Activated T-helper 1 cell treated with anti-CD3 and anti-CD28 coated beads, Interleukin-12 subunit alpha, Interleukin-12 subunit beta, Interleukin-2, Interleukin-4 antibody, amounts not matched to agents 30 ng/mL and 10 ng/mL and 1 ng/mL, durations not matched to agents 14 hours and 24 hours and 36 hours (primary cell): ENCODE measurements at regions of chr19 and their contacts with region 1.

Region 1: DNA sequence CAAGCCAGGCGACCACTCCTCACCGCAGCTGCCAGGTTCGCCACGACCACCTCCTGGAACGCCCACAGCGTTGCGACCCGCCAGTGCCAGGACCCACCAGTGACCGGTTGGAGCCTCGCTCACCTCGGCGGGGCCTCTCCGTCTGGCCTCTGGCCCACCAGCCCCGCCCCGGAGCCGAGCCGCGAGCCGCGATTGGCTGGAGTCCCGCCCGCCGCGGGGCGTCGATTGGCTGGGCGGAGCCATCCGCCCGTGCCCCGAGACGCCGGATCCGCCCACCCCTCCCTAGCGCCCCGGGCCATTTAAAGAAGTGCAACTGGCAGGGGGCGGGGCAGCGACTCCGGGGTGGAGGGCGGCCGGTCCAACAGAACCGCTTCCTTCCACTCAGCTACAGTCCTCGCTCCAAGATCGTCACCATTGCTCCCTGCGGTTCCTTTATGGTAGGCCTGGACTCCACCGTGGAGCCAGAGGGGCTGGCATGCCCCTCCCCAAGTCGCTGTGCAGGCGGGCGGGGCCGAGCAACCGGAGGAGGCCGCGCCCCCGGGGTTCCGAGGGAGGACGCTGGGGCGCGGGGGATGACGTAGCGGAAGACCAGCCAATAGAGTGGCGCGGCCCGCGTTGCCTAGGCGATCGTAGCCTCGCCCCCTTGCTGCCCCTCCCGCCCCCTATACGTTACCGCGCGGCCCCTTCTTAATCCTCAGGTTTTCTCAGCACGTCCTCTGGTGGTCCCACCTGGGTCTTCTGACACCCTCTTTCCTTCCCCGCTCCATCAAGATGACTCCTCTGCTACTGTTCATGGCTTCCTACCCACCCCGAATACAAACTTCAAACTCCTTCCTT is at the start of gene SERTAD3:
- DNase-seq: peak; percentile 97
- H3K4me3 Mint-ChIP-seq: peak within 1 kb of the TSS; percentile 97
- H3K27ac Mint-ChIP-seq: peak within 1 kb of the TSS; percentile 97
- H3K4me1 Mint-ChIP-seq: peaks cover 26% of the 10 kb centered on the region
- H3K27me3 Mint-ChIP-seq: no peaks in the 10 kb centered on the region
- total RNA-seq, gene SERTAD3: 6.4 and 10.0 TPM in 2 replicates

Region 2: DNA sequence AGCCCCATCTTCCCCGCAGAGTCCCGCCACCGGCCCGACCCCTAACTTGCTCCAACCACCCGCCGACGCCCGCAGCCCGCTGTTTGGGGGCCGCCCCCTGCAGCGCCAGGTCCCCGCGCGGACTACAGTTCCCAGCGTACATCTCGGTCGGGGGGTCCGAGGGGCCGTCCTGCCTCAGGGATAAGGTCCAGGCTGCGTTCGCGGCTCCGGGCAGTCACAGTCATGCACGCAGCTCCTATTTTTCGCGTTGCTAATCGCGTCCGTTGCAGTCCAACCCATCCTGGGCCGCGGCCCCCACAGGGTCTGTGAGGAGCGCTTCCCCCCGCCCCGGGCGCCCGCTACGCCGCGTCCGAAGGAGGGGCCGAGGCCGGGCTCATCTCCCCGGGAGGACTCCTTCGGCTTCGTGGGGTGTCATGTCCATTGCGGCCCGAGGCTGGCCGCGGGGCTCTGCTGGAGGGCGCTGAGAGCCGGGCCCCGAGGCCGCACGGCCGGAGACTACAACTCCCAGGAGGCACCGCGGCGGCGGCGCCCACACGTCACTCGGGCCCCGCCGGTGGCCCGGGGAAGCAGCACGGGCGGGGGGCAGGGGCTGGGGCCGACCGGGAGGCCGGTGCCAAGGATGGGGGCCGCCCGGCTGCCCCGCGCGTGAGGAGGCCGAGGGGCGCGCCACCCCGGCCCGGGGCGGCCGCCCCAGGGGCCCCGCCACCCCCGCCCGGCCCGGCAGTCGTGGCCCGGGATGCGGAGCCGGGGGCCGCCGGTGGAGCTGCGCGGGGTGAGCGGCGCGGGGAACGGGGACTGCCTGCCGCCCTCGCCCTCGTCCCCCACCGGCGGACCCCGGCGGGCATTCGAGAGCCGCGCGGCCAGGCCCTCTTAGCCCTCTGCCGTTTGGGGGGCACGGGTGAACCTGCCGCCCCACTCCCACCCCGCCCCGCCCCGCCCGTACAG is 253.2 kb before region 1 on chr19 and contains the start of gene MAP3K10:
- intact Hi-C with region 1: loop called (anchors 2 kb)
- DNase-seq: peak; percentile 73
- H3K4me3 Mint-ChIP-seq: peak within 1 kb of the TSS; percentile 90
- H3K27ac Mint-ChIP-seq: peak within 1 kb of the TSS; percentile 93
- H3K4me1 Mint-ChIP-seq: peaks cover 34% of the 10 kb centered on the region
- H3K27me3 Mint-ChIP-seq: peaks cover 8% of the 10 kb centered on the region
- total RNA-seq, gene MAP3K10: 13.8 and 19.8 TPM in 2 replicates

Region 3: DNA sequence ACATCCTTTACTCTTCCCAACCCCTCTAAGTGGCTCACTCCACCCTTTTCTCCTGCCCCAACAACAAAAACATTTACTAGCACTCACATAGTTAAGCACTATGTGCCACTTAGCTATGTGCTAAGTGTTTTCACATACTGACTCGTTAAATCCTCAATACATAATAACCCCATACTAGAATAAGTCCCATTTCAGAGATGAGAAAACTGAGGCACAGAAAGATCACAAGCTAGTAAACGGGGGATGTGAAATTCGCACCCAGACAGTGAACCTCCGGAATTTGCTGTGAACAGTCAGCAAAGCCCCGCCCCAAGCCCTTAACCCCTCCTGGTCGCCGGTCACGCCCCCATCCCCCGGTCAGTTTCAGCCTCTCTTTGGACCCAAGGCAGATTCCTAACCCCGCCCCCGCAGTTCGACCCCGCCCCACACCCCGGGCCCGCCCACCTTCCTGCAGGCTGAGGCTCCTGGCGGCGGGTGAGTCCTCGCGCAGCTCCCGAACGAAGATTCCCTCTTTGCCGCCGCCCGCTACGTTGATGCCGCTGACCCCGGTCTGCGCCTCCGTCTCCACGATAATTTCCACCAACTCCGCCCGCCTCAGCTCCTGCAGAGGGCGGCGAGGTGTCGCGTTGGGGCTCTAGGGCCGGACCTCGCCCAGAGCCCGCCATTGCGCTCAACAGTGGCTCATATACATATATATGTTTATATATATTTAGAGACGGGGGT is 41.0 kb before region 1 on chr19:
- intact Hi-C with region 1: loop called (anchors 1 kb)
- DNase-seq: peak; percentile 80
- H3K4me3 Mint-ChIP-seq: peak overlapping the region; percentile 83
- H3K27ac Mint-ChIP-seq: peak overlapping the region; percentile 72
- H3K4me1 Mint-ChIP-seq: peaks cover 21% of the 10 kb centered on the region
- H3K27me3 Mint-ChIP-seq: peaks cover 7% of the 10 kb centered on the region

Region 4: DNA sequence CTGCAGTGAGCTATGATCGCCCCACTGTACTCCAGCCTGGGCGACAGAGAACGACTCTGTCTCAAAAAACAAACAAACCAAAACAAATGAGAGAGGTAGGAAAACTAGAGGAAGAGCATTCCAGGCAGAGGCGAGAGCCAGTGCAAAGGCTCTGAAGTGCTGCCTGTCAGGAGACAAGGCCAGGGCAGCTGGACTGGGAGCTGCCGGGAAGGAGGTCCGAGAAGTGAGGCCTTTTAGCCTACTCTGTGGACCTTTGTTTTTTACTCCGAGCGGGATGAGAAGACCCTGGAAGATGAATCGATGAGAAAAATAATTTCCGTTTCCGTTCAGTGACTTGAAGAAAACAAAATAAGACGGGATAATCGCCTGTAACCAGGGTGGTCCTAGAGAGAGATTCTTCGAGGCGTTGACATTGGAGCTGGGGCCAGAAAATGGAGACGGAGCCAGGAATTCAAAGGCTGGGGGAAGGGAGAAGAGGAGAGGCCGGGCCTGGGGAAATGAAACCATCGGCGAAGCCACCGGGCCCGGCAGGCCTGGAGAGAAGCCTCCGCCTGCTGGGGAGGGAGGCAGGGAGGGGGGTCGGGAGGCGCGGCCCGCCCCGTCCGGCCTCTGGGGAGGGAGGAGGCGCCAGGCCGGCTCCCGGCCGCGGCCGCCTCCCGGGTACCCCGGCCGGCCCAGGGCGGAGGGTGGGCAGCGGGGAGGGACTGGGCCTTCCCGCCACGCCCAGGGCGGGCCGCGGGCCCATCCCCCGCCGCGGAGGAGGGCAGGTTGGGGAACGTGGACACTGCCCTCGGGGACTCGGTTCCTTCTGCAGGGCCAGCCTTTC is 10.8 kb before region 1 on chr19:
- intact Hi-C with region 1: loop called (anchors 1 kb)
- DNase-seq: peak; percentile 60
- H3K4me3 Mint-ChIP-seq: peak overlapping the region; percentile 88
- H3K27ac Mint-ChIP-seq: peak overlapping the region; percentile 92
- H3K4me1 Mint-ChIP-seq: peaks cover 8% of the 10 kb centered on the region
- H3K27me3 Mint-ChIP-seq: no peaks in the 10 kb centered on the region

Region 5: DNA sequence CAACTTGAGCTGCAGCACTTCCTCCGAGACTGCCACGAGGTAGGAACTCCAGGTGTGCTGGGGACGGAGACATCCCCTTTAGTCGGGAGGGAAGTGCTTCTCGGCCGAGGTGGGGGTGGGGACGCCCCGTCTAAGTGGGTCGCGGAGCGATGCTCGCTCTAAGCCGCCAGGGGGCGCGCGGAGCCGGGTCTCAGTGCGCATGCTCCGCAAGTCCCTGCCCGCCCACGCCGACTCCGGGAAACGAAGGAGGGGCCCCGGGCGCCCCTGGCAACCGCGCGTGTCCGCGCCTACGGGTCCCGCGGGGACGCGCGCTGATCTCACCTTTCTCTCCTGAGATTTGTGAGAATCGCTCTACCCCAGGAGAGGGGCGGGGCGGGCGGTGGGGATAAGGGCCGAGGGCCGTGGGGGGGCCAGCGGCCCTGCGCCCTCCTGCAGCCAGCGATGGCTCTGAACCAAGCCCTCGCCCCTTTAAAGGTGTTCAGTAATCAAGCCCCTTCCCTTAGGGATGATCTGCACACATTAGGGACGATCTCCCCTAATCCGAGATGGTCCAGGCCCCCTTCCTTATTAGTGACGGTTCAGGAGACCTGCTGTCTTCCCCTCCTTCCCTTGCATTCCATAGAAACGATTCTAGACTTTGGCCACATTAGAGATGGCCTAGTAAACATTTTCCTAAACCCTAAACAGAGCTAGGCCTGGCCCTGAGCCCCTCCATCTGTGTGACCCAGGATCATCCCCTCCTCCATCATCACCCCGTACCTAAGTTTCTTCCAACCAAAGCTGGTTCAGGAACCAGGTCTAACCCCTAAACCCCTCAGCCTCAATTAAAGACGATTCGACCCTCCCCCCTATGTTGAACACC is 84.9 kb after region 1 on chr19:
- intact Hi-C with region 1: no loop called
- DNase-seq: peak; percentile 89
- H3K4me3 Mint-ChIP-seq: peak overlapping the region; percentile 74
- H3K27ac Mint-ChIP-seq: peak overlapping the region; percentile 79
- H3K4me1 Mint-ChIP-seq: peaks cover 13% of the 10 kb centered on the region
- H3K27me3 Mint-ChIP-seq: peaks cover 35% of the 10 kb centered on the region

Region 6: GRCh38 chr19:40614622-40615411 is 170.4 kb after region 1 on chr19:
- intact Hi-C with region 1: loop called (anchors 1 kb)
- DNase-seq: peak; percentile 75
- H3K4me3 Mint-ChIP-seq: peak overlapping the region; percentile 97
- H3K27ac Mint-ChIP-seq: peak overlapping the region; percentile 100
- H3K4me1 Mint-ChIP-seq: peaks cover 41% of the 10 kb centered on the region
- H3K27me3 Mint-ChIP-seq: no peaks in the 10 kb centered on the region